CD4-positive, alpha-beta T cell (primary cell): ENCODE measurements at regions of chr12 and their contacts with region 1.

Region 1: DNA sequence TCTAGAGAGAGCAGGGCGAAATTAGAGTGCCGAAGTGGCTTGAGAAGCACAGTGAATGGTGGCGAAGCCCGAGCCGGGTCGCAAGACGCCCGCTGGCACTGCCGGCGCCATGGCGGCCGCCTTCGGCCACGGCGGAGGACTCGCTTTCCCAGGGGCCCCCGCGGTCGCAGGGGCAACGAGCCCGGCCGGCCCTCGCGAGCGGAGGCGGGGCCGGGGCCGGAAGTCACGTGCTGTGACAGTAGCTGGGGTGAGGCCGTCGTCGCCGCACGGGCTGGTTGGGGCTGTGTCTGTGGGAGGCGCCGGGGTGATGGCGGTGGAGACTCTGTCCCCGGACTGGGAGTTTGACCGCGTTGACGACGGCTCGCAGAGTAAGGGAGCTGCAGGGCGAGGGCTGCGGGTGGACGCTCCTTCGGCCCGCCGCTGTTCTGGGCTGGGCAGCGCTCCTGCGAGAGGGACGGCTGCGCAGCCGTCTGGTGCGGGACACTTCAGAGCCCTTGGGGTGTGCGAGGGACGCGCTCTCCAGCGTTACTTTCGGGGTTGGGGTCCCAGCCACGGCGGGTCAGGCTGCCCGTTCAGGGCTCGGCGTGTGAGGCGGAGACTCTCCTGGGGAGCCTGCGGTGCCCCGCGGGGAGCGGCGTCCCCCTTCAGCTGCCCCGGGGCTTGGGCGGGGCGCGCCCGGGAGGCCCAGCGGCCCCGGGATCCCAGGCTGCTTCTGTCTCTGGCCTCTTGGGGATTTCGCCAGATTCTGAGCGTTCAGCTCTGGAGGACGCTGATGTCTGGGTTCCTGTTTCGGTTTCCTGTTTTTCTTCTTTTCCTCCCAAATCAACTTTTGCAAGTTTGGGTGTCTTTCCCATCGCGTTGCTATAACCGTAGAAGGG is at the start of gene WASHC4:
- DNase-seq: peak; percentile 87 to 96 (median 90)
- ATAC-seq: peak; percentile 95
- H3K4me3 ChIP-seq: peak within 1 kb of the TSS; percentile 93
- H3K4me3 Mint-ChIP-seq: peak within 1 kb of the TSS; percentile 98
- H3K27ac ChIP-seq: peak within 1 kb of the TSS; percentile 95 to 96
- H3K27ac Mint-ChIP-seq: peak within 1 kb of the TSS; percentile 89
- H3K4me1 ChIP-seq: peaks cover 13% of the 10 kb centered on the region
- H3K4me1 Mint-ChIP-seq: peaks cover 49% of the 10 kb centered on the region
- H3K27me3 ChIP-seq: peaks cover 4 to 9% of the 10 kb centered on the region in 2 experiments
- H3K27me3 Mint-ChIP-seq: peaks cover 30% of the 10 kb centered on the region
- CTCF ChIP-seq: no peak
- total RNA-seq, gene WASHC4: 32.5 to 33.6 TPM

Region 2: DNA sequence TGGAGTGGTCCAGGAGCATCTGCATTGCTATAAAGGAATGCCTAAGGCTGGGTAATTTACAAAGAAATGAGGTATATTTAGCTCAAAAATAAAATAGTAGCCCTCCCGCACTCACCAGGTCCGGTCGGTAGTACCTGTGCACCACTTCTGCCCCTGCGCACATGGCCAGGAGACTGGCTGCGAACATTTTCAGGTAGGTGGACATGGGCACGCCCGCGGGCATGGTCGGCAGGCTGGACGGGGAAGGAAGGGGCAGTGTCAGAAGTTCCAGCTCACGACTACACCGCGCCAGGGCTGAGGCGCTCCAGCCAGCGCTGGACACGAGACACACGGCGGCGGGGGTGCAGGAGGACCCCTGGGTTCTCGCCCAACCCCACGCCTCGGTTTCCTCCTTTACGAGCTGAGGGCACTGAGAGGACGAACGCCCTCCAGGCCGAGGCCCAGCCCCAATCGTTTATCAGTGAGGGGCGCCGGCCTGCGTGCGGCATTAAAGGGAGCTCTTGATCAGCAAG is 1151.2 kb before region 1 on chr12:
- CTCF ChIA-PET with region 1: no interaction called
- POLR2A ChIA-PET with region 1: no interaction called
- intact Hi-C with region 1: loop called in 1 of 2 experiments (anchors 5 kb)
- DNase-seq: peak in 2 of 14 experiments; percentile 10 to 34
- ATAC-seq: no peak
- H3K4me3 ChIP-seq: peak overlapping the region; percentile 95
- H3K4me3 Mint-ChIP-seq: peak overlapping the region; percentile 99
- H3K27ac ChIP-seq: peak overlapping the region; percentile 64 to 74
- H3K27ac Mint-ChIP-seq: peak overlapping the region; percentile 97
- H3K4me1 ChIP-seq: peaks cover 25% of the 10 kb centered on the region
- H3K4me1 Mint-ChIP-seq: peaks cover 42% of the 10 kb centered on the region
- H3K27me3 ChIP-seq: no peaks in the 10 kb centered on the region
- H3K27me3 Mint-ChIP-seq: no peaks in the 10 kb centered on the region
- CTCF ChIP-seq: no peak

Region 3: GRCh38 chr12:104064031-104064822 is 1043.5 kb before region 1 on chr12 and contains the start of gene HCFC2:
- CTCF ChIA-PET with region 1: no interaction called
- POLR2A ChIA-PET with region 1: no interaction called
- intact Hi-C with region 1: loop called in 1 of 2 experiments (anchors 10 kb)
- DNase-seq: peak; percentile 74 to 93 (median 85)
- ATAC-seq: peak; percentile 92
- H3K4me3 ChIP-seq: peak within 1 kb of the TSS; percentile 85
- H3K4me3 Mint-ChIP-seq: peak within 1 kb of the TSS; percentile 95
- H3K27ac ChIP-seq: peak within 1 kb of the TSS; percentile 42 to 59
- H3K27ac Mint-ChIP-seq: peak within 1 kb of the TSS; percentile 82
- H3K4me1 ChIP-seq: peaks cover 17% of the 10 kb centered on the region
- H3K4me1 Mint-ChIP-seq: peaks cover 33% of the 10 kb centered on the region
- H3K27me3 ChIP-seq: peaks cover 0 to 2% of the 10 kb centered on the region in 2 experiments
- H3K27me3 Mint-ChIP-seq: peaks cover 10% of the 10 kb centered on the region
- CTCF ChIP-seq: no peak
- total RNA-seq, gene HCFC2: 11.2 to 15.1 TPM

Region 4: DNA sequence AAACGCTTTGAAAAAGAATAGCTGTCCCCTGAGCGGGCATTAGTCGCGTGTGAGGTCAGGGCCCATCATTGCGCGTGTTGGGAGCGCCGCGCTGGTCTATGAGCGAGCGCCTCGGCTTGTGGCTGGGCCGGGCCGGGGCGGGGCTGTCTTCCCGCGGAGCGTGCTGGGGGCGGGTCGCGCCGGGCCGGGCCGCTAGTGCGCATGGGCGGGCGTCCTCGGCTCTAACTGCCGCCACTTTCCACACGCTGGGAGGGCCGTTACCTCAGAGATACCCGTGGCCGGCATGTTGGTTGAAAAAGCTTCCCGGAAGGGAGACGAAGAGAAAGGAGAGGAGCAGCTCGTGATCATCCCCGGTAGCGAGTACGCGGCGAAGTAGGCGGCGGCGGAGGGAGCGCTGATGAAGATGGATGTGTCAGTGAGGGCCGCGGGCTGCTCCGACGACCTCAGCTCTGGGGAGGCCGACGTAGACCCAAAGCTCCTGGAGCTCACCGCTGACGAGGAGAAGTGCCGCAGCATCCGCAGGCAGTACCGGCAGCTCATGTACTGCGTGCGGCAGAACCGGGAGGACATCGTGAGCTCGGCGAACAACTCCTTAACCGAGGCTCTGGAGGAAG is 804.1 kb before region 1 on chr12 and contains the start of gene EID3:
- CTCF ChIA-PET with region 1: no interaction called
- POLR2A ChIA-PET with region 1: no interaction called
- intact Hi-C with region 1: loop called in 1 of 2 experiments (anchors 5 kb)
- DNase-seq: peak; percentile 81 to 94 (median 90)
- ATAC-seq: peak; percentile 93
- H3K4me3 ChIP-seq: peak within 1 kb of the TSS; percentile 73
- H3K4me3 Mint-ChIP-seq: peak within 1 kb of the TSS; percentile 92
- H3K27ac ChIP-seq: peak within 1 kb of the TSS; percentile 75 to 84
- H3K27ac Mint-ChIP-seq: peak within 1 kb of the TSS; percentile 99
- H3K4me1 ChIP-seq: peaks cover 23% of the 10 kb centered on the region
- H3K4me1 Mint-ChIP-seq: peaks cover 68% of the 10 kb centered on the region
- H3K27me3 ChIP-seq: no peaks in the 10 kb centered on the region
- H3K27me3 Mint-ChIP-seq: no peaks in the 10 kb centered on the region
- CTCF ChIP-seq: no peak
- total RNA-seq, gene EID3: 13.5 to 14.3 TPM

Region 5: DNA sequence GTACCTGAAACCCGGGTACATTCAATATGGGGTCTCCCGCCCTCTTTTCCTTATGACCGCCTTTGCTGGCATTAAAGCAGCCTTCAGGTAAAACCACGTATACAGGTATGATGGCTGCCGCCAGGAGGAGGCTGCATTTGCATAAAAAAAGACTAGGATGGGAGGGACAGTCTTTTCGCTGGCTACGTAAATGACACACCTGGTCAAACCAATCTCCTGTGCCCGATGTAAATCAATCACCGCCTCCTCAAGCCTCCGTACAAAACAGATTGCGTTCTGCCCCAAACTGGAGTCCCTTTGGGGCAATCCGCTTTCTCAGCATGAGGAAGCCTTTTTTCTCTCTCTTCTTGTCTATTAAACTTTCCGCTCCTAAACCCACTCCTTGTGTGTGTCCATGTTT is 15.4 kb before region 1 on chr12:
- CTCF ChIA-PET with region 1: no interaction called
- POLR2A ChIA-PET with region 1: no interaction called
- intact Hi-C with region 1: no loop called
- DNase-seq: no peak
- ATAC-seq: no peak
- H3K4me3 ChIP-seq: no peak overlapping the region
- H3K4me3 Mint-ChIP-seq: no peak overlapping the region
- H3K27ac ChIP-seq: no peak overlapping the region
- H3K27ac Mint-ChIP-seq: no peak overlapping the region
- H3K4me1 ChIP-seq: no peaks in the 10 kb centered on the region
- H3K4me1 Mint-ChIP-seq: no peaks in the 10 kb centered on the region
- H3K27me3 ChIP-seq: no peaks in the 10 kb centered on the region
- H3K27me3 Mint-ChIP-seq: peaks cover 19% of the 10 kb centered on the region
- CTCF ChIP-seq: no peak

Region 6: GRCh38 chr12:105235732-105236476 is 128.2 kb after region 1 on chr12 and contains the start of gene APPL2:
- CTCF ChIA-PET with region 1: no interaction called
- POLR2A ChIA-PET with region 1: interaction called, 3 read pairs
- intact Hi-C with region 1: loop called in 1 of 2 experiments (anchors 5 kb)
- DNase-seq: peak; percentile 55 to 90 (median 80)
- ATAC-seq: peak; percentile 76
- H3K4me3 ChIP-seq: peak within 1 kb of the TSS; percentile 74
- H3K4me3 Mint-ChIP-seq: peak within 1 kb of the TSS; percentile 94
- H3K27ac ChIP-seq: peak within 1 kb of the TSS; percentile 68 to 83
- H3K27ac Mint-ChIP-seq: peak within 1 kb of the TSS; percentile 90
- H3K4me1 ChIP-seq: peaks cover 39% of the 10 kb centered on the region
- H3K4me1 Mint-ChIP-seq: peaks cover 47% of the 10 kb centered on the region
- H3K27me3 ChIP-seq: no peaks in the 10 kb centered on the region
- H3K27me3 Mint-ChIP-seq: no peaks in the 10 kb centered on the region
- CTCF ChIP-seq: peak; percentile 48
- total RNA-seq, gene APPL2: 58.8 to 59.9 TPM

Region 7: GRCh38 chr12:105330283-105330930 is 222.7 kb after region 1 on chr12 and contains the start of gene C12orf75:
- CTCF ChIA-PET with region 1: no interaction called
- POLR2A ChIA-PET with region 1: interaction called, 3 read pairs
- intact Hi-C with region 1: loop called in 1 of 2 experiments (anchors 5 kb)
- DNase-seq: peak; percentile 60 to 93 (median 79)
- ATAC-seq: peak; percentile 82
- H3K4me3 ChIP-seq: peak within 1 kb of the TSS; percentile 72
- H3K4me3 Mint-ChIP-seq: peak within 1 kb of the TSS; percentile 87
- H3K27ac ChIP-seq: peak within 1 kb of the TSS; percentile 32 to 63
- H3K27ac Mint-ChIP-seq: peak within 1 kb of the TSS; percentile 87
- H3K4me1 ChIP-seq: peaks cover 30% of the 10 kb centered on the region
- H3K4me1 Mint-ChIP-seq: peaks cover 55% of the 10 kb centered on the region
- H3K27me3 ChIP-seq: no peaks in the 10 kb centered on the region
- H3K27me3 Mint-ChIP-seq: no peaks in the 10 kb centered on the region
- CTCF ChIP-seq: no peak
- total RNA-seq, gene C12orf75: 16.7 to 17.0 TPM